Heart left ventricle (tissue), 16 donors: ENCODE measurements at regions of chr4 and their contacts with region 1.

Region 1: DNA sequence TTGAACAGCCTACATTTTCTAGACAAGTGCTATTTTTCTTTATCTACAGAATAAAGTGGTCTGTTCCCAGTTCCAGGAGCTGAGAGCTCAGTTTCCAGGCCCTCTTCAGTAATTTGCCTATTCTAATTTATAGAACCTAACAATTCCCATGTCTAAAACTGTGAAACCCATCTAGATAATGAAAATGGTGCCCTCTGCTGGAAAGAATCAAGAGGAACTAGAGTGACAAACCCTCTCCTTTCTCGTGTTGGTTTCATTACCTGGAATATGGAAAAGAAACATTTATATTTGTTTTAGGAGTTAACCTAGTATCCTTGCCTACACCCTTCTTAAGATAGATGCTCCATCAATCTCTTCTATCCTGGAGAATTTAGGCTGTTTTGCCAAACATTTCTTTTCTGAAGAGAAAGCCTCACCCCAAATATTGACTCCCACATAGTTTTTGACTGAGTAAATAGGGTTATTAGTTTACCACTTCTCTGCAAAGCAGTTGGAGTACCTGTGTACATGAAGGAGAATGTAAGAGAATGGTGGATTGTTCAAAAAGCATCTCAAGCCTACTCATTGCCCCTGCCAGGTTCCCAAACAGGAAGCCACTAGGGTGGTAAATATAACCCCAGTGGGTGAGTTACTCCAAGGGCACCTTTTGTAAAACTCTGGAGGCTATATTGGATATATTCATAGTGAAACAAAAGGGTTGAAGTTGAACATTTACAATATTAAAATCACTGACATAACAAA is 121.6 kb downstream of the RASL11B start:
- DNase-seq: no peak
- ATAC-seq: peak; percentile 48 to 81 (median 62)
- H3K4me3 ChIP-seq: no peak overlapping the region
- H3K27ac ChIP-seq: peak overlapping the region in 4 of 12 donors; percentile 1 to 28 (median 4)
- H3K4me1 ChIP-seq: peaks cover 0 to 22% (median 11%) of the 10 kb centered on the region in 12 donors
- H3K27me3 ChIP-seq: no peaks in the 10 kb centered on the region
- CTCF ChIP-seq: peak; percentile 59 to 86 (median 75)
- POLR2A ChIP-seq: no peak

Region 2: GRCh38 chr4:52103319-52103718 is 880.4 kb before region 1 on chr4:
- intact Hi-C with region 1: loop called in 3 of 10 experiments (anchors 10 kb)
- DNase-seq: no peak
- ATAC-seq: peak in 1 of 4 donors; percentile 42
- H3K4me3 ChIP-seq: no peak overlapping the region
- H3K27ac ChIP-seq: no peak overlapping the region
- H3K4me1 ChIP-seq: peaks cover 0 to 8% (median 0%) of the 10 kb centered on the region in 12 donors
- H3K27me3 ChIP-seq: no peaks in the 10 kb centered on the region
- CTCF ChIP-seq: peak in 6 of 12 donors; percentile 13 to 40 (median 35)
- POLR2A ChIP-seq: no peak

Region 3: GRCh38 chr4:52376132-52376704 is 607.5 kb before region 1 on chr4:
- intact Hi-C with region 1: loop called (anchors 1 to 5 kb)
- DNase-seq: peak in 1 of 5 donors; percentile 20
- ATAC-seq: no peak
- H3K4me3 ChIP-seq: no peak overlapping the region
- H3K27ac ChIP-seq: no peak overlapping the region
- H3K4me1 ChIP-seq: peaks cover 0 to 6% (median 0%) of the 10 kb centered on the region in 12 donors
- H3K27me3 ChIP-seq: no peaks in the 10 kb centered on the region
- CTCF ChIP-seq: peak; percentile 40 to 74 (median 62)
- POLR2A ChIP-seq: no peak

Region 4: DNA sequence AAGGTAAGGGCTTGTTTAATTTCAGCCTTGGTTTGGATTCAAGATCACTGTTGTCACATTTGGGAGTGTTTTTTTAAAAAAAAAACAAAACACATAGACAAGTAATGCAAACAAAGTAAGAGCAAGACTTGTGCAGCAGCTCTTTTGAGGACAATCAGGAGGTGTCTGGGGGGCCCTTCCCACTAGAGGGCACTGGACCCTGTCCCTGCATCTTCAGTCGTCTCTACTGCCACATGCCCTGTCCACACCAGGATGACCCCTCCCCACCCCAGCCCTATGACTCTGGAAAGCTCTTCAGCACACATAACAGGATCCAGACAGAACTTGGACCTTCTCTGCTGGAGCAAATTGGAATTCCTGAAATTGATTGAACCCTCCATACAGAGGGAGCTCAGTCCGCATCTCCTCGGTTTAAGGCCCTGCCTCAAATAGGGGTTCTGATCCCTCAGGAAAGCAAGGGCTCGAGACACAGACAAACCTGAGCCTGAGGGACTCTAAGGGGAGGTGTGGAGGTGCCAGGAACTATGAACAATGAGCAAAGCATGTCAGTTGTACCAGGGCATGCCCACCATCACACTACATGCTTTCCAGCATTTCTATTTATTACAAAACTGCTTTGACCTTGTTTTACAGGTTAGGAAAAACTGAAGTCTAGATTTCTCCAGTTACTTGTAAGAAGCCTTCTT is 395.5 kb before region 1 on chr4:
- intact Hi-C with region 1: loop called in 1 of 10 experiments (anchors 5 kb)
- DNase-seq: peak in 2 of 5 donors; percentile 40 to 48
- ATAC-seq: peak in 3 of 4 donors; percentile 50 to 52 (median 52)
- H3K4me3 ChIP-seq: no peak overlapping the region
- H3K27ac ChIP-seq: peak overlapping the region in 10 of 12 donors; percentile 33 to 93 (median 60)
- H3K4me1 ChIP-seq: peaks cover 0 to 47% (median 19%) of the 10 kb centered on the region in 12 donors
- H3K27me3 ChIP-seq: no peaks in the 10 kb centered on the region
- CTCF ChIP-seq: peak; percentile 33 to 63 (median 54)
- POLR2A ChIP-seq: no peak

Region 5: GRCh38 chr4:52665592-52665991 is 318.1 kb before region 1 on chr4:
- intact Hi-C with region 1: loop called in 1 of 10 experiments (anchors 5 kb)
- DNase-seq: no peak
- ATAC-seq: peak; percentile 30 to 58 (median 34)
- H3K4me3 ChIP-seq: no peak overlapping the region
- H3K27ac ChIP-seq: no peak overlapping the region
- H3K4me1 ChIP-seq: peaks cover 0 to 21% (median 10%) of the 10 kb centered on the region in 12 donors
- H3K27me3 ChIP-seq: peaks cover 0 to 5% (median 0%) of the 10 kb centered on the region in 9 donors
- CTCF ChIP-seq: peak in 9 of 12 donors; percentile 9 to 48 (median 22)
- POLR2A ChIP-seq: no peak

Region 6: DNA sequence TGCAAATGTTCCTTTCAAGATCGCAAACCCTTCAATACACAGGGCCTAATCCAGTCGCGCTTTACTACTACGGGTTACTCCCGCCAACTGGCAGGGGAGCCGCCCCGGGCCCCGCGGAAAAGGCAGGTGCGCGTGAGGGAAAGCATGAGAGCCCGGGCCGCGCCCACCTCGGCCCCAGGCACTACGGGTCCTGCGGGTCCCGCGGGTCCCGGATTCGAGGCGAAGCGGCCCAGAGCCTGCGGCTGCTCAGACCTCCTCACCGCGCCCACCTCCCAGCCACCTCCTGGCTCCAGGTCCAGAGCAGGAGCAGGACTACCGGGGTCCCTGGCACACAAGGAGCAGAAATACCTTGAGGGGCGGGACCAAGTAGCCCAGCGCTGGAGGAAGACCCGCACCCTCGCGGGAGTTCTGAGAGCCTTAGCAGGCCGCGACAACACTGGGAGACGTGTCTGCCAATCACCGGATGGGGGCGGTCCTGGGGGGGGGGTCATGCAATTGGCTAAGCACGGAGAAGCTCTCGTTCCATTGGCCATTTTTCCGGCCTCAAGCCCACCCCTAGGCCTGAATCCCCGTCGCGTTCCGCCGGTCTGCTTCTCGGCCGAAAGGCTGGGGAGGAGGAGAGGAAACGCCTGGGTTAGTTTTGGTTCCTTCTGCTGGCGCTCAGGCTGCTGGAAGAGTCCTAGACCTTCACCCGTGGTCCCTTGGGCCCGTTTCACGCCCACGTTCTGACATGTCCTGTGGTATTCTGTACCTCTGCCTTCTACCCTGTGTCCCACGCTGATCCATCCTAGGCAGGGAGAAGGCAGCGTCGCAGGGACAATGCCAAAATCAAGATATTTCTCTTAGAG is 261.5 kb before region 1 on chr4:
- intact Hi-C with region 1: loop called in 3 of 10 experiments (anchors 10 kb)
- DNase-seq: peak; percentile 95 to 97 (median 95)
- ATAC-seq: peak; percentile 98 to 99 (median 98)
- H3K4me3 ChIP-seq: peak overlapping the region; percentile 62 to 96 (median 78)
- H3K27ac ChIP-seq: peak overlapping the region; percentile 80 to 97 (median 92)
- H3K4me1 ChIP-seq: peaks cover 0 to 16% (median 2%) of the 10 kb centered on the region in 12 donors
- H3K27me3 ChIP-seq: no peaks in the 10 kb centered on the region
- CTCF ChIP-seq: peak in 3 of 12 donors; percentile 9 to 32 (median 13)
- POLR2A ChIP-seq: peak in 1 of 2 donors; percentile 80

Region 7: GRCh38 chr4:52841682-52842456 is 141.9 kb before region 1 on chr4:
- intact Hi-C with region 1: no loop called
- DNase-seq: peak in 4 of 5 donors; percentile 46 to 72 (median 65)
- ATAC-seq: peak in 3 of 4 donors; percentile 47 to 58 (median 58)
- H3K4me3 ChIP-seq: no peak overlapping the region
- H3K27ac ChIP-seq: peak overlapping the region in 9 of 12 donors; percentile 10 to 73 (median 38)
- H3K4me1 ChIP-seq: peaks cover 0 to 62% (median 46%) of the 10 kb centered on the region in 12 donors
- H3K27me3 ChIP-seq: no peaks in the 10 kb centered on the region
- CTCF ChIP-seq: no peak
- POLR2A ChIP-seq: no peak

Region 8: GRCh38 chr4:52911684-52912294 is 71.9 kb before region 1 on chr4:
- intact Hi-C with region 1: loop called in 2 of 10 experiments (anchors 5 kb)
- DNase-seq: peak; percentile 65 to 83 (median 72)
- ATAC-seq: peak in 3 of 4 donors; percentile 61 to 68 (median 64)
- H3K4me3 ChIP-seq: no peak overlapping the region
- H3K27ac ChIP-seq: no peak overlapping the region
- H3K4me1 ChIP-seq: peaks cover 0 to 27% (median 12%) of the 10 kb centered on the region in 12 donors
- H3K27me3 ChIP-seq: no peaks in the 10 kb centered on the region
- CTCF ChIP-seq: peak; percentile 61 to 79 (median 74)
- POLR2A ChIP-seq: no peak

Region 9: DNA sequence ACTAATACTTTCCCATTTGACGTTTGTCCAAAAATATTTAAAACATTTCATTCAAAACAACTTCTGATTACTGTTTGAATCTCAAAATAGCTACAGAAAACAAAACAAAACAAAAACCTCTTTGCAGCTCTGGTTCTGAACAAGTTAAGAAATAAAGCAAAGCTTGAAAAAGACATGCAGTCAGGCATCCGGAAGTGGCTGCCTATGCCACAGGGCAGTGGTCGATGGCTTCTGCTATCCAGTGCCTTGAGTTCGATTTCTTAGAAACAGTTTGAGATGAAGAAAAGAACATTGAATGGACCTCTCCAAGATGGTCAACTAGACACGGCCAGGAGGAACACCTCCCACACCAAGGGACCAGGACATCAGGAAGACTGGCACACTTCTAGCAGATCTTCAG is 256.8 kb after region 1 on chr4:
- intact Hi-C with region 1: no loop called
- DNase-seq: no peak
- ATAC-seq: no peak
- H3K4me3 ChIP-seq: no peak overlapping the region
- H3K27ac ChIP-seq: no peak overlapping the region
- H3K4me1 ChIP-seq: no peaks in the 10 kb centered on the region
- H3K27me3 ChIP-seq: no peaks in the 10 kb centered on the region
- CTCF ChIP-seq: no peak
- POLR2A ChIP-seq: no peak

Region 10: GRCh38 chr4:53313510-53313909 is 329.8 kb after region 1 on chr4:
- intact Hi-C with region 1: no loop called
- DNase-seq: no peak
- ATAC-seq: no peak
- H3K4me3 ChIP-seq: no peak overlapping the region
- H3K27ac ChIP-seq: no peak overlapping the region
- H3K4me1 ChIP-seq: no peaks in the 10 kb centered on the region
- H3K27me3 ChIP-seq: no peaks in the 10 kb centered on the region
- CTCF ChIP-seq: peak in 3 of 12 donors; percentile 13 to 23 (median 14)
- POLR2A ChIP-seq: no peak